Posterior cingulate gyrus (tissue), 11 donors: ENCODE measurements at regions of chr11 and their contacts with region 1.

Region 1: GRCh38 chr11:73961321-73961720 is 10.5 kb downstream of the DNAJB13 start:
- DNase-seq: peak in 6 of 10 donors; percentile 29 to 87 (median 71)

Region 2: DNA sequence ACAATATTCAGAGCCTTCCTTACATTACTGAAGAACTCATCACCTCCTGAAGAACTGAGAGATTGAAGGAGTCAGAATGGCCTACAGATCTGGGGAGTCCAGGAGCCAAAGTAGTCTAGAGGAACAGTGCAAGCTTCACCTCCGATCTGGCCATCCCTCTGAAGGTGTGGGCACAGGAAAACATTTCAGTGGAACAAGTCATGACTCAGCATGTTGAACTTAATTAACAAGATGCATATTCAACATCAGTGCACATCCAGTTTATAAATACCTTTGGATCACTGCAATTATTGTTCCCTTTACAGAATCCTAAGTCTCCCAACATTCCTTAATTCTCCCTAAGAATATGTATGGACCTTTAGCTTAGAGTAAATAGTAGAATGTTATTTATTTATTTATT is 59.0 kb before region 1 on chr11:
- intact Hi-C with region 1: no loop called
- DNase-seq: no peak

Region 3: GRCh38 chr11:73921180-73921579 is 40.1 kb before region 1 on chr11:
- intact Hi-C with region 1: no loop called
- DNase-seq: no peak

Region 4: GRCh38 chr11:74090701-74091100 is 129.4 kb after region 1 on chr11:
- intact Hi-C with region 1: loop called (anchors 5 kb)
- DNase-seq: no peak

Region 5: DNA sequence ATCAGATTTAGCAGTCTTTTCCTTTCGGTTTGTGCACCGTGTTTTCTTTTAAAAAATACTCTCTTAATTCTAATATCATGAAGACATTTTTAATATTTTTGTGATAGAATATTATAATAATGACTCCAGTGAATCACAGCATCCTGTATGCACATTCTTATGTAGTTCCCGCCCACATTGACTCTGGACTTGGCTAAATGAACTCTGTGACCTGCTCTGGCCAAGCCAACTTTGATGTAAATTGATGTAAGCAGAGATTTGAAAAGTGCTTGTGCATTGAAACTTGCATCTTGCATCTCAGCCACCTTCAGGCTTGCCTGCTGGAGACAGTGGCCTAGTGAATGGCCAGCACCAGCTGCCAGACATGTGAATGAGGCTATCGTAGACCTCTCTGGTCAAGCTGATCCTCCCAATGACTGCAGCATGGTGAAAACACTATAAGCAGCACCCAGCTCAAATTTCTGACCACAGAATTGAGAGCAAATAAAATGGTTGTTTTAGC is 466.1 kb after region 1 on chr11:
- intact Hi-C with region 1: no loop called
- DNase-seq: no peak